Heart right ventricle (tissue), 16 donors: ENCODE measurements at regions of chr12 and their contacts with region 1.

Region 1: GRCh38 chr12:80186727-80187217 is 87.4 kb downstream of the OTOGL start:
- DNase-seq: peak in 1 of 2 donors; percentile 83
- ATAC-seq: peak; percentile 90 to 97 (median 95)
- H3K4me3 ChIP-seq: peak overlapping the region in 1 of 10 donors; percentile 1
- H3K27ac ChIP-seq: peak overlapping the region; percentile 36 to 92 (median 87)
- H3K4me1 ChIP-seq: peaks cover 2 to 42% (median 27%) of the 10 kb centered on the region in 9 donors
- H3K27me3 ChIP-seq: no peaks in the 10 kb centered on the region
- CTCF ChIP-seq: peak; percentile 42 to 90 (median 78)

Region 2: GRCh38 chr12:79555028-79555930 is 631.5 kb before region 1 on chr12:
- intact Hi-C with region 1: loop called (anchors 2 to 10 kb)
- DNase-seq: peak in 1 of 2 donors; percentile 15
- ATAC-seq: peak in 2 of 8 donors; percentile 40 to 47
- H3K4me3 ChIP-seq: no peak overlapping the region
- H3K27ac ChIP-seq: no peak overlapping the region
- H3K4me1 ChIP-seq: peaks cover 0 to 47% (median 12%) of the 10 kb centered on the region in 9 donors
- H3K27me3 ChIP-seq: no peaks in the 10 kb centered on the region
- CTCF ChIP-seq: peak; percentile 25 to 79 (median 58)

Region 3: GRCh38 chr12:79766705-79767464 is 419.9 kb before region 1 on chr12:
- intact Hi-C with region 1: loop called in 2 of 10 experiments (anchors 10 kb)
- DNase-seq: no peak
- ATAC-seq: no peak
- H3K4me3 ChIP-seq: no peak overlapping the region
- H3K27ac ChIP-seq: no peak overlapping the region
- H3K4me1 ChIP-seq: peaks cover 0 to 17% (median 6%) of the 10 kb centered on the region in 9 donors
- H3K27me3 ChIP-seq: no peaks in the 10 kb centered on the region
- CTCF ChIP-seq: no peak

Region 4: DNA sequence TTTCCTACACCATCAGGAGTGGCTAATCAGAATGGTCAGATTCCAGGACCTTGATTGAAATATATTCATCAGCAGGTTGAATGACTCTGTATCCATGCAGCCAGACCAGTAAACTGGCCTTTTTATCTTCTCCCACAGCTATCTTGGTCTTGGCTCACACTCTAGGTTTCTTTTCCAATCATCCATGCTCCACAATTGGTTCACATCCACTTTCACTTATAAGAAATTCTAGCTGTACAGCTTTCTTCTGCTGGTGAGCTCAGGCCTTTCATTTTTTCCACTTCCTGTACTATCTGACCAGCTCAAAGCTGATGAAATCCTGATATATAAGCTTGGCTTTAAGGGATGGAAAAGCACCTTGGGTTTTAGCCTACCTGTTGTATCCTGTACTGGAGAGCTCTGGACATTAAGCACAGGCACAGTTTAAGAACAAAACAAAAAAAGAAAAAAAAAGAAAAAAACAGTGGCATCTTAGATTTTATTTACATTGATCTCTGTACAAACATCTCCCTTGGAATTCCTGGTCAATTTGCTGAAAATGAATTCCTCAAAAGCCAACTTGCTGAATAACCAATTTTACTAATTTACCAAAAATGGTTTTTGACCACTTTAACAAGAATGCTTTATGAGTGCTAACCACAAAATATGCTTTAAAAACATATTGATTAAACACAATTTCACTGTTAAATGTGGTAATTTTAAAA is 404.4 kb before region 1 on chr12:
- intact Hi-C with region 1: loop called in 2 of 10 experiments (anchors 10 kb)
- DNase-seq: no peak
- ATAC-seq: peak in 7 of 8 donors; percentile 55 to 88 (median 81)
- H3K4me3 ChIP-seq: no peak overlapping the region
- H3K27ac ChIP-seq: peak overlapping the region in 8 of 10 donors; percentile 9 to 49 (median 36)
- H3K4me1 ChIP-seq: peaks cover 0 to 16% (median 13%) of the 10 kb centered on the region in 9 donors
- H3K27me3 ChIP-seq: no peaks in the 10 kb centered on the region
- CTCF ChIP-seq: no peak

Region 5: DNA sequence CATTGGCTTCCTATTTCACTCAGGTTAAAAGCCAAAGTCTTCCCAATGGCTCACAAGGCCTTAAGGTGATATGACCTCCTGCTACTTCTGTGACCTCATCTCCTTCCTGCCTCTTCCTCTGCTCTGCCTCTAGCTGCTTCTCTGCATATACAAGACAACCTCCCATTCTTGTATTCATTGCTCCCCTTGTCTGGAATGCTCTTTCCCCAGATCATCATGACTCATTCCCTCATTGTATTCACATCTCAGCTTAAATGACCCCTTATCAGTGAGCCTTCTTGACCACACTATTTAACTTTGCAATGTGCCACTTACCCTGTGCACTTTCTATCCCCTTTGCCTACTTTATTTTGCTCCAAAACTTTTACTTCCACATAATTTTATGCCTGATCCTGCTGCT is 342.1 kb before region 1 on chr12:
- intact Hi-C with region 1: no loop called
- DNase-seq: no peak
- ATAC-seq: peak in 2 of 8 donors; percentile 19 to 51
- H3K4me3 ChIP-seq: no peak overlapping the region
- H3K27ac ChIP-seq: peak overlapping the region in 1 of 10 donors; percentile 10
- H3K4me1 ChIP-seq: peaks cover 0 to 64% (median 38%) of the 10 kb centered on the region in 9 donors
- H3K27me3 ChIP-seq: no peaks in the 10 kb centered on the region
- CTCF ChIP-seq: no peak

Region 6: GRCh38 chr12:79886917-79887519 is 299.8 kb before region 1 on chr12:
- intact Hi-C with region 1: loop called in 6 of 10 experiments (anchors 5 to 10 kb)
- DNase-seq: no peak
- ATAC-seq: peak in 4 of 8 donors; percentile 54 to 77 (median 59)
- H3K4me3 ChIP-seq: no peak overlapping the region
- H3K27ac ChIP-seq: no peak overlapping the region
- H3K4me1 ChIP-seq: peaks cover 0 to 93% (median 74%) of the 10 kb centered on the region in 9 donors
- H3K27me3 ChIP-seq: no peaks in the 10 kb centered on the region
- CTCF ChIP-seq: peak in 8 of 9 donors; percentile 22 to 68 (median 60)

Region 7: GRCh38 chr12:79935021-79935623 is 251.7 kb before region 1 on chr12 and contains the start of gene PPP1R12A:
- intact Hi-C with region 1: loop called in 6 of 10 experiments (anchors 1 to 5 kb)
- DNase-seq: peak; percentile 98
- ATAC-seq: peak; percentile 97 to 100 (median 98)
- H3K4me3 ChIP-seq: peak within 1 kb of the TSS; percentile 74 to 97 (median 87)
- H3K27ac ChIP-seq: peak within 1 kb of the TSS; percentile 90 to 98 (median 96)
- H3K4me1 ChIP-seq: peaks cover 0 to 51% (median 44%) of the 10 kb centered on the region in 9 donors
- H3K27me3 ChIP-seq: no peaks in the 10 kb centered on the region
- CTCF ChIP-seq: peak in 6 of 9 donors; percentile 16 to 40 (median 28)
- total RNA-seq, gene PPP1R12A: 46.3 to 73.5 (median 60.5) TPM

Region 8: DNA sequence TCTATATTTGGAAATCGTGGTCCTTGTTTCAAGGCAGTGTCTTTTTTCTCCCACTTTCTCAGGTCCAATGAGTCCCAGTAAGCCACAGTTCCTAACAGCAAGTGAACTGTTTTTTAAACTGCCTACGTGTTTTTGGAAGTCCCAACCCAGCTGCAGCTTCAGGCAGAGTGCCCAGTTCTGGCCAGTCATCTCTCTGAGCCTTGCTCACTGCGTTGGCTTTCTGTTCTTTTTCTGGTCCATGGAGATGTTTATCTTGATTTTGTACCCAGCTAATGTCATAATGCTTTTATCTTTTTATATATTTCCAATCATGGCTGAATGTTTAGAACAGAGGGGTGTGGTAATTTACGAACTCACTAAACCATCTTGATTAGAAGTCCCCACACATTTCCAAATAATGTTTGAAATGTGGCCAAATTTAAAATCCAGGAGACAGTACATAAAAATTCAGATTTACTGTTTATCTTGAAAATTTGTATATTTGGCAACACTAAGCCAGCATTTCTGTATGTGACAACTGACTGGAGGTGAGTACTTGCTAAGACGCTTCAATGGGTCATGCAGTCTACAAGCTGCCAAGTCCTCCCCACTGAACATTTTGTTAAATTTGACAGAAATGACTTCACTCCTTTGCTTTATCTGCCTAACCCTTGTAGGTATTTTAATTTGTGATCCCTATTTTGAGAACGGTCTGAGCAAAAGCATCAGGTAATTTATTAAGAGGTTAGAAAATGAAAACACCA is 133.6 kb before region 1 on chr12:
- intact Hi-C with region 1: loop called in 1 of 10 experiments (anchors 5 kb)
- DNase-seq: peak; percentile 58 to 65
- ATAC-seq: peak in 6 of 8 donors; percentile 72 to 83 (median 78)
- H3K4me3 ChIP-seq: no peak overlapping the region
- H3K27ac ChIP-seq: peak overlapping the region in 4 of 10 donors; percentile 16 to 49 (median 24)
- H3K4me1 ChIP-seq: peaks cover 0 to 29% (median 12%) of the 10 kb centered on the region in 9 donors
- H3K27me3 ChIP-seq: no peaks in the 10 kb centered on the region
- CTCF ChIP-seq: no peak

Region 9: DNA sequence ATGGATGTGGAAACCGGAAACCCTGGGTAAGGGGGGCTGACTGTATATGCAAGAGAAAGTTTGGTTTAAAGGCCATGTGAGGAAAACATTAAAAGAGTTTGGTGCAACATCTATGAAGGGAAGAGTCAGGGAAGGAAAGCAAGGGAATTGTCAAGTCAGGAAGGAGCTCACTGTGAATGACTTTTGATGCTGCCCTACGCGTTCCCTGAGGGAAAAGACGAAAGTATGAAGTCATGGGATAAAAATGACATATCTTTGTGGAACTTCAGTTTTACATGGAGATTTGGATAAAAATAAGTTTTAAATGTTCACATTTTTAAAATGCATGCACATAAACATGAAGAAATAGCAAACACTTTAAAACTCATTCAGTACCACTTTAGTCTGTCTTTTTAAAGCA is 157.1 kb after region 1 on chr12:
- intact Hi-C with region 1: no loop called
- DNase-seq: no peak
- ATAC-seq: no peak
- H3K4me3 ChIP-seq: no peak overlapping the region
- H3K27ac ChIP-seq: no peak overlapping the region
- H3K4me1 ChIP-seq: no peaks in the 10 kb centered on the region
- H3K27me3 ChIP-seq: no peaks in the 10 kb centered on the region
- CTCF ChIP-seq: no peak